Body of pancreas (tissue), 4 donors: ENCODE measurements at regions of chr4 and their contacts with region 1.

Region 1: GRCh38 chr4:88514557-88515511 is 8.7 kb downstream of the PYURF start:
- DNase-seq: peak in 3 of 4 donors; percentile 23 to 53 (median 25)
- ATAC-seq: peak; percentile 90
- H3K4me3 ChIP-seq: no peak overlapping the region
- H3K27ac ChIP-seq: peak overlapping the region in 2 of 4 donors; percentile 1 to 22
- H3K4me1 ChIP-seq: peaks cover 13% of the 10 kb centered on the region
- H3K27me3 ChIP-seq: no peaks in the 10 kb centered on the region
- CTCF ChIP-seq: no peak
- POLR2A ChIP-seq: no peak

Region 2: DNA sequence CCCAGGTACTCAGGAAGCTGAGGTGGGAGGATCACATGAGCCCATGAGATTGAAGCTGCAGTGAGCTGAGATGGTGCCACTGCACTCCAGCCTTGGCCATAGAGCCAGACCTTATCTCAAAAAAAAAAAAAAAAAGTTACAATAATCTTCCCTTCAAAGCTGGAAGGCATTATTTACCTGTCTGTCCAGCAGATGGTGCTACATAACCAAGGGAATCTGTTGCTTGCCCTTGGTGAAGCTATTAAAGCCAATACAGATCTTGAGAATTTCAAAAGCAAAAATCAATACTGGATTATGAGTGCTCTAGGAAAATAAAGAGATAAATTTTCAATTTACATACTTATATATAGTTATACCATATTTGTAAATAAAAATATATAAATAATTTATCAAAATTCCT is 481.5 kb before region 1 on chr4:
- intact Hi-C with region 1: loop called (anchors 10 kb)
- DNase-seq: peak; percentile 59 to 76 (median 64)
- ATAC-seq: peak; percentile 71
- H3K4me3 ChIP-seq: no peak overlapping the region
- H3K27ac ChIP-seq: no peak overlapping the region
- H3K4me1 ChIP-seq: no peaks in the 10 kb centered on the region
- H3K27me3 ChIP-seq: no peaks in the 10 kb centered on the region
- CTCF ChIP-seq: peak; percentile 41 to 86 (median 82)
- POLR2A ChIP-seq: no peak

Region 3: DNA sequence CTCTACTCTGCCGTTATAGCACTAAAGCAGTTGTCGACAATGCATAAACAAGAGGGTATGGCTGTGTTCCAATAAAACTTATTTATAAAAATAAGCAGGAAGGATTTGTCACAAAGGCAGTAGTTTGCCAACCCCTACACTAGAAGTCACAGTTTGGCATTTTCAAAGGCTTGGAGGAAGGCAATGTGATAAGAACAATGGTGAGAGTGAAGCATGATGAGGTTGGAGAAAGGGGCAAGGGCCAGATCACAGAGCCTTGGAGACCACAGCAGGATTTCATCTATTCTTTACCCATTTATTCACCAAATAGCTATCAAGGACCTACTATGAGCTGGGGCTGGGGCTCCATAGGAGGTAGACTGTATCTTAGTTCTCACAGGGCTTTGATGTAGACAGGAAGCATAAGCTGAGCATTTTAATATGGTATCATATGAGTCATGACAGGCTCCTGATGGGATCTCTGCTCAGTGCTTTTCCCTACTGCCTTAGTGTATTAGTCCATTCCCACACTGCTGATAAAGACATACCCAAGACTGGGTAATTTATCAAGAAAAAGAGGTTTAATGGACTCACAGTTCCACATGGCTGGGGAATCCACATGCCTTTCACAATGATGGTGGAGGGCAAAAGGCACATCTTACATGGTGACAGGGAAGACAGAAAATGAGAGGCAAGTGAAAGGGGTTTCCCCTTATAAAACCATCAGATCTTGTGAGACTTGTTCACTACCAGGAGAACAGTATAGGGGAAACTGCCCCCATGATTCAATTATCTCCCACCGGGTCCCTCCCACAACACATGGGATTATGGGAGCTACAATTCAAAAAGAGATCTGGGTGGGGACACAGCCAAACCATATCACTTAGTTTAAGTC is 289.4 kb before region 1 on chr4:
- intact Hi-C with region 1: loop called (anchors 5 kb)
- DNase-seq: no peak
- ATAC-seq: no peak
- H3K4me3 ChIP-seq: no peak overlapping the region
- H3K27ac ChIP-seq: no peak overlapping the region
- H3K4me1 ChIP-seq: no peaks in the 10 kb centered on the region
- H3K27me3 ChIP-seq: no peaks in the 10 kb centered on the region
- CTCF ChIP-seq: no peak
- POLR2A ChIP-seq: no peak

Region 4: GRCh38 chr4:88291003-88291402 is 223.8 kb before region 1 on chr4:
- intact Hi-C with region 1: loop called (anchors 10 kb)
- DNase-seq: peak; percentile 69 to 90 (median 80)
- ATAC-seq: peak; percentile 100
- H3K4me3 ChIP-seq: no peak overlapping the region
- H3K27ac ChIP-seq: peak overlapping the region; percentile 55 to 94 (median 91)
- H3K4me1 ChIP-seq: peaks cover 17% of the 10 kb centered on the region
- H3K27me3 ChIP-seq: no peaks in the 10 kb centered on the region
- CTCF ChIP-seq: no peak
- POLR2A ChIP-seq: peak in 2 of 3 donors; percentile 31 to 52

Region 5: GRCh38 chr4:88378691-88379559 is 135.9 kb before region 1 on chr4 and contains the start of gene HERC6:
- intact Hi-C with region 1: loop called (anchors 10 kb)
- DNase-seq: peak; percentile 79 to 92 (median 84)
- ATAC-seq: peak; percentile 93
- H3K4me3 ChIP-seq: peak within 1 kb of the TSS; percentile 93 to 98
- H3K27ac ChIP-seq: peak within 1 kb of the TSS; percentile 91 to 100 (median 94)
- H3K4me1 ChIP-seq: no peaks in the 10 kb centered on the region
- H3K27me3 ChIP-seq: no peaks in the 10 kb centered on the region
- CTCF ChIP-seq: peak; percentile 51 to 84 (median 66)
- POLR2A ChIP-seq: peak; percentile 10 to 69 (median 55)
- total RNA-seq, gene HERC6: 2.3 to 8.8 TPM